CD4-positive, alpha-beta T cell (primary cell): ENCODE measurements at regions of chr6 and their contacts with region 1.

Region 1: DNA sequence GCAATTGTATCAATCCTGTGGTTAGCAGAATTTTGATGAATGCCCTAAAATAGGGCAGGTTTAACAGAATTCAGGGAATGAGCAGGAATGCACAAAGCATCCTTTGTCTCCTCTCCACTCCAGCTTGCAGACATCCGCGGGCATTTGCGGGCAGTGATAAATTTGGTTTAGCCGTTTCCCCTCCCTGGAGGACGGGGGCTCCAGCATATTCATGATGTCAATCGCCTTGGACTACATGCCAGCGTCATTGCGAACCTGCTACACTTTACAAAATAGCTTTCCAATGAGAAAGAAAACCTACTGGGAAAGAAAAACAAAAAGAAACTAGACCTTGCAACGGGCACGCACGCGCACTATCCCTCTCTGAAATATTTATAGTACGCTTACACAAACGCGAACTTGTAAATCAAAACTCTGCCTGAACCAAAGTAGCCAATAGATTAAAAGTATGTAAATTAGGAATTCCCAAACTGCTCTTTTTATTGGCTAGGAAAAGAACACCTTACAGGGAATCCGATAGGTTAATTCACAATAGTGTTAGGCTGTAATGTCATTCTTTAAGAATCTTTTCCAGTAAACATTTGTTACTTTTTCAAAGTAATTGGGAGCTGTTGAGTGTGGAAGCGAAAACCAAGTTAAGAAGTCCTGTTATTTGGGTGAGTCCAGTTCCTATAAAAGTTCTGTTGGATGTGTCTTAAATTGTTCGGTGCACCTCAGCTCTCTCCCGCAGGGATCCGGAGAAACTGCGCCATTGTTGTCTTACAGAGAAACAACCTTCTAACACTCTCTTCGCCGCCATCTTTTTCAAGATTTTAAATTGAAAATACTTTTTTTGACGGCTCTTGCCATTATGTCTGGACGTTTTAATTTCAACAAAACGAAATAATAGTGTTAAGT is 136.7 kb downstream of the HFE start:
- DNase-seq: peak in 13 of 14 experiments; percentile 45 to 93 (median 60)
- ATAC-seq: peak; percentile 87
- H3K4me3 ChIP-seq: peak overlapping the region; percentile 68
- H3K4me3 Mint-ChIP-seq: no peak overlapping the region
- H3K27ac ChIP-seq: peak overlapping the region; percentile 72 to 82
- H3K27ac Mint-ChIP-seq: no peak overlapping the region
- H3K4me1 ChIP-seq: peaks cover 18% of the 10 kb centered on the region
- H3K4me1 Mint-ChIP-seq: peaks cover 5% of the 10 kb centered on the region
- H3K27me3 ChIP-seq: no peaks in the 10 kb centered on the region
- H3K27me3 Mint-ChIP-seq: no peaks in the 10 kb centered on the region
- CTCF ChIP-seq: no peak

Region 2: DNA sequence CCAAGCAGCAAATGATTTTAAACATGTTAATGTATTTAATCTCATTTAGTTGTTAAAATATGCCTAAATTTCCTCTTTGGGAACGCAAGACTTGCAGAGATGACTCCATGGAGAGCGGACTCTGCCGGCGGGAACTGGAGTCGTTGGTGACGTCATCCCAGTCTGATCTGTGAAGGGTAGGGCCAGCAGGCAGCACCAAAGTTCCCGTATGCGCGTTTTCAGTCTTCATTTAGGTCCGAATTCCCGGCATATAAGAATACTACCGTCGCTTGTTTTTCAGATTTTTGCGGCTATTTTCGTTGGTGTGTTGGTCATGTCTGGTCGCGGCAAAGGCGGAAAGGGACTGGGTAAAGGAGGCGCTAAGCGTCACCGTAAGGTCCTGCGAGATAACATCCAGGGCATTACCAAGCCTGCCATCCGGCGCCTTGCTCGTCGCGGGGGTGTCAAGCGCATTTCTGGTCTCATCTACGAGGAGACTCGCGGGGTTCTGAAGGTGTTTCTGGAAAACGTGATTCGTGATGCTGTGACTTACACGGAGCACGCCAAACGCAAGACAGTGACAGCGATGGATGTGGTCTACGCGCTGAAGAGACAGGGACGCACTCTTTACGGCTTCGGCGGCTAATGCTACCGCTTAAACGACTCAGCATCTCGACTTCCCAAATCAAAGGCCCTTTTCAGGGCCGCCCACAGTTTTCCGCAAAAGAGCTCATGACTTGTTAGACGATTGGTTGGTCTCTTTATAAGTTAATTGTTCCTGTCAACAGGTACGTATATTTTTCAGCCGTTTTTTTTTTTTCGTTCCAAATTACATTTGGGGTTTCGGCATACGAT is 19.3 kb before region 1 on chr6:
- CTCF ChIA-PET with region 1: interaction called, 3 read pairs
- POLR2A ChIA-PET with region 1: interaction called, 1,838 read pairs
- intact Hi-C with region 1: no loop called
- DNase-seq: peak; percentile 73 to 98 (median 80)
- ATAC-seq: peak; percentile 69
- H3K4me3 ChIP-seq: peak overlapping the region; percentile 68
- H3K4me3 Mint-ChIP-seq: no peak overlapping the region
- H3K27ac ChIP-seq: peak overlapping the region; percentile 89 to 90
- H3K27ac Mint-ChIP-seq: no peak overlapping the region
- H3K4me1 ChIP-seq: peaks cover 34% of the 10 kb centered on the region
- H3K4me1 Mint-ChIP-seq: peaks cover 8% of the 10 kb centered on the region
- H3K27me3 ChIP-seq: no peaks in the 10 kb centered on the region
- H3K27me3 Mint-ChIP-seq: no peaks in the 10 kb centered on the region
- CTCF ChIP-seq: peak; percentile 32

Region 3: GRCh38 chr6:26240154-26241032 is 16.5 kb after region 1 on chr6:
- CTCF ChIA-PET with region 1: interaction called, 4 read pairs
- POLR2A ChIA-PET with region 1: interaction called, 754 read pairs
- intact Hi-C with region 1: no loop called
- DNase-seq: peak; percentile 45 to 96 (median 64)
- ATAC-seq: peak; percentile 76
- H3K4me3 ChIP-seq: peak overlapping the region; percentile 66
- H3K4me3 Mint-ChIP-seq: peak overlapping the region; percentile 84
- H3K27ac ChIP-seq: peak overlapping the region; percentile 78 to 90
- H3K27ac Mint-ChIP-seq: peak overlapping the region; percentile 96
- H3K4me1 ChIP-seq: peaks cover 17% of the 10 kb centered on the region
- H3K4me1 Mint-ChIP-seq: peaks cover 23% of the 10 kb centered on the region
- H3K27me3 ChIP-seq: no peaks in the 10 kb centered on the region
- H3K27me3 Mint-ChIP-seq: no peaks in the 10 kb centered on the region
- CTCF ChIP-seq: no peak

Region 4: GRCh38 chr6:26249957-26250697 is 26.2 kb after region 1 on chr6:
- CTCF ChIA-PET with region 1: interaction called, 13 read pairs
- POLR2A ChIA-PET with region 1: interaction called, 5 read pairs
- intact Hi-C with region 1: loop called in 1 of 2 experiments (anchors 2 kb)
- DNase-seq: peak; percentile 64 to 93 (median 74)
- ATAC-seq: peak; percentile 78
- H3K4me3 ChIP-seq: peak overlapping the region; percentile 75
- H3K4me3 Mint-ChIP-seq: peak overlapping the region; percentile 97
- H3K27ac ChIP-seq: peak overlapping the region; percentile 72 to 80
- H3K27ac Mint-ChIP-seq: peak overlapping the region; percentile 88
- H3K4me1 ChIP-seq: peaks cover 29% of the 10 kb centered on the region
- H3K4me1 Mint-ChIP-seq: peaks cover 44% of the 10 kb centered on the region
- H3K27me3 ChIP-seq: no peaks in the 10 kb centered on the region
- H3K27me3 Mint-ChIP-seq: no peaks in the 10 kb centered on the region
- CTCF ChIP-seq: no peak

Region 5: DNA sequence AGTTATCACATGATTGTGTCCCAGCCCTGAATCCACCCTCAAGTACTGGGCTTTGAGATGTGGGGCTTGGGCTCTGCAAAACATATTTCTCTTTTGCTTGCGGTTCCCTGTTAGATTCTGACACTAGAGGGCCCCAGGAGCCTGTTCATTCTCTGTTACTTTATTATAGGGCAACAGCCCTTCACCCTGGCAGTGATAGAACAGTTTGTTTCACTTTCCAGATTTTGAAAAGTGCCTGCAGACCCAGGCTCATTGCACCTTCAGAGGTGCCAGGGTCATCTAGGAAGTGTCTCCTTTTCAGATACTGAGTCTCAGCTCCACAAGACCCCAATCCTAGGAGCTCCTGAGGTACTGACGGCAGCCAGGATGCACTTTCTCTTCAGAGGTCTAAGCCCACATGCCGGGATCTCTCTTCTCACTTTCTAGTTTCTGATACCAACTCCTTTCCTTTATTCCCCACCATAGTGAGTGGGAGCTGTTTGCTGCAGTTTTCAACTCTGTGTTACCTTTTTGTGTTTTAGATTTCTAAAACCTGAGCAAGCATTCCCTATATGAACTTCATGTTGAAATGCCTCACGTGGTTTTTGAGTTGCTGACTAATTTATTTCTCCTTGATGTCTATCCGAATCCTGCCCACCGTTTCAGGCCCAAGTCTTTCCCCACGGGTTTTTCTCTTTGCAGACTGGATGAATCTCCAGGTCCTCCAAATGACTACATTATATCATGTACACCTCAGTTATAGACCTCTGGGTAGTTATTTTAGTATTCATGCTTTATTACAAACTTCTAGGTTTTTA is 383.7 kb after region 1 on chr6:
- CTCF ChIA-PET with region 1: no interaction called
- POLR2A ChIA-PET with region 1: no interaction called
- intact Hi-C with region 1: no loop called
- DNase-seq: peak; percentile 21 to 83 (median 49)
- ATAC-seq: peak; percentile 99
- H3K4me3 ChIP-seq: peak overlapping the region; percentile 42
- H3K4me3 Mint-ChIP-seq: peak overlapping the region; percentile 75
- H3K27ac ChIP-seq: no peak overlapping the region
- H3K27ac Mint-ChIP-seq: peak overlapping the region; percentile 21
- H3K4me1 ChIP-seq: peaks cover 11% of the 10 kb centered on the region
- H3K4me1 Mint-ChIP-seq: peaks cover 11% of the 10 kb centered on the region
- H3K27me3 ChIP-seq: peaks cover 0 to 2% of the 10 kb centered on the region in 2 experiments
- H3K27me3 Mint-ChIP-seq: peaks cover 9% of the 10 kb centered on the region
- CTCF ChIP-seq: peak; percentile 79